ENCODE measurements at regions of chr2 and their contacts with region 1.

Region 1: GRCh38 chr2:237486819-237487444 is at the start of gene MLPH:
- DNase-seq: peak; percentile 80
- ATAC-seq: peak; percentile 30
- H3K4me3 ChIP-seq: peak within 1 kb of the TSS; percentile 92
- H3K27ac ChIP-seq: peak within 1 kb of the TSS; percentile 98
- H3K4me1 ChIP-seq: peaks cover 78% of the 10 kb centered on the region
- H3K27me3 ChIP-seq: no peaks in the 10 kb centered on the region
- CTCF ChIP-seq: no peak
- total RNA-seq, gene MLPH: 201 and 270 TPM in 2 replicates

Region 2: GRCh38 chr2:237184927-237185925 is 301.7 kb before region 1 on chr2:
- CTCF ChIA-PET with region 1: no interaction called
- POLR2A ChIA-PET with region 1: interaction called, 13 read pairs
- intact Hi-C with region 1: no loop called
- DNase-seq: no peak
- ATAC-seq: no peak; the same call in 1 of the 2 replicates
- H3K4me3 ChIP-seq: no peak overlapping the region
- H3K27ac ChIP-seq: peak overlapping the region; percentile 51
- H3K4me1 ChIP-seq: peaks cover 16% of the 10 kb centered on the region
- H3K27me3 ChIP-seq: no peaks in the 10 kb centered on the region
- CTCF ChIP-seq: no peak

Region 3: DNA sequence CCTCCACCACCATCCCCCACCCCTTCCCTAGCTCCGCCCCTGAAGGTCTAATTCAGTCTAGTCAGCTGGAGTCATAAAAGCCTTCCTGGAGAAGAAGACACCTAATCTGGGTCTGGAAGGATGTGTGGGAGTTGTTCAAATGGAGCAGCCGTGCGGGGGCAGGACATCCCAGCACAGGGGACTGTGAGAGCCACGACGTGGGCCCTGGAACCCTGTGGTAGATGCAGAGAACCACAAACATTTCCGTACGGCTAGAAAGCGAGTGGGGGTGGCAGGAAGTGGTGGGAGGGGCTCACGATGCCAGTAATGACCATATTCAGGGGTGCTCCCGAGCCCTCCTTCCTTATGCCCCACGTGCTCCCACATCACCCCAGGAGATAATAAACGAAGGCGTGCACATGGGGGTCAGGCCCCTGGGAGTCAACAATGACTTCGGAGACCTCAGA is 52.0 kb before region 1 on chr2:
- CTCF ChIA-PET with region 1: interaction called, 4 read pairs
- POLR2A ChIA-PET with region 1: interaction called, 4 read pairs
- intact Hi-C with region 1: loop called (anchors 5 kb)
- DNase-seq: peak; percentile 72
- ATAC-seq: peak; percentile 7
- H3K4me3 ChIP-seq: peak overlapping the region; percentile 61
- H3K27ac ChIP-seq: peak overlapping the region; percentile 100
- H3K4me1 ChIP-seq: peaks cover 68% of the 10 kb centered on the region
- H3K27me3 ChIP-seq: no peaks in the 10 kb centered on the region
- CTCF ChIP-seq: no peak

Region 4: GRCh38 chr2:237500681-237501424 is 13.9 kb after region 1 on chr2:
- CTCF ChIA-PET with region 1: interaction called, 5 read pairs
- POLR2A ChIA-PET with region 1: interaction called, 38 read pairs
- intact Hi-C with region 1: loop called (anchors 1 kb)
- DNase-seq: peak; percentile 98
- ATAC-seq: peak; percentile 71
- H3K4me3 ChIP-seq: no peak overlapping the region
- H3K27ac ChIP-seq: peak overlapping the region; percentile 100
- H3K4me1 ChIP-seq: peaks cover 52% of the 10 kb centered on the region
- H3K27me3 ChIP-seq: no peaks in the 10 kb centered on the region
- CTCF ChIP-seq: no peak

Region 5: DNA sequence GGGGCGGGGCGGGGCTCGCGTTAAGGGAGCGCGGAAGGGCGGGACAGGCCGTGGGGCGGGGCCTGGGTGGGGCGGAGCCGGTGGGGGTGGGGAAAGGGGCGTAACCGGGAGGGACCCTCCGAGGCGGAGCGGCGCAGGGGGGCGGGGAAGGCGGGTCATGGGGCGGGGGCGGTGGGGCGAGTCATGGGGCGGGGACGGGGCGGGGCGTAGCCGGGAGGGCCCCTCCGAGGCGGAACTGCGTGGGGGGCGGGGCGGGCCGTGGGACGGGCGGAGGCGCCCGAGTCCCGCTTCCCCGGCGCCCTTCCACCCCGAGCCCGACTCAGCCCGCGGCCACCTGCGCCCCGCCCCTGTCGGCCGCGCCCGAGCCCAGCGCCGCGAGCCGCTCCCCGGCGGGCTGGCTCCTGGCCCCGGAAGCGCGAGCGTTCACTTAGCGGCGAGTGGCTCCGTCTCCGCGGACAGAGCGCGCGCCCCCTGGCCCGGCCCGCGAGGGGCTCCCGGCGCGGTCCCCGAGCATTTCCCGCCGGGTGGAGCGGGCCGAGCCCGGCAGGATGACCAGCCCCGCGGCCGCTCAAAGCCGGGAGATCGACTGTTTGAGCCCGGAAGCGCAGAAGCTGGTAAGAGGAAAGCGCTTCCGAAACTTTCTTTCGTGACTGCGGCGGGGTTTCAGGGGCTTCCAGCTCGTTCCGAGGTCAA is 205.1 kb after region 1 on chr2:
- CTCF ChIA-PET with region 1: no interaction called
- POLR2A ChIA-PET with region 1: no interaction called
- intact Hi-C with region 1: loop called (anchors 5 kb)
- DNase-seq: peak; percentile 86
- ATAC-seq: peak; percentile 59
- H3K4me3 ChIP-seq: peak overlapping the region; percentile 94
- H3K27ac ChIP-seq: peak overlapping the region; percentile 91
- H3K4me1 ChIP-seq: peaks cover 68% of the 10 kb centered on the region
- H3K27me3 ChIP-seq: no peaks in the 10 kb centered on the region
- CTCF ChIP-seq: no peak

Measured in PC-3 (cell line).